ENCODE measurements at regions of chr4 and their contacts with region 1.

Region 1: DNA sequence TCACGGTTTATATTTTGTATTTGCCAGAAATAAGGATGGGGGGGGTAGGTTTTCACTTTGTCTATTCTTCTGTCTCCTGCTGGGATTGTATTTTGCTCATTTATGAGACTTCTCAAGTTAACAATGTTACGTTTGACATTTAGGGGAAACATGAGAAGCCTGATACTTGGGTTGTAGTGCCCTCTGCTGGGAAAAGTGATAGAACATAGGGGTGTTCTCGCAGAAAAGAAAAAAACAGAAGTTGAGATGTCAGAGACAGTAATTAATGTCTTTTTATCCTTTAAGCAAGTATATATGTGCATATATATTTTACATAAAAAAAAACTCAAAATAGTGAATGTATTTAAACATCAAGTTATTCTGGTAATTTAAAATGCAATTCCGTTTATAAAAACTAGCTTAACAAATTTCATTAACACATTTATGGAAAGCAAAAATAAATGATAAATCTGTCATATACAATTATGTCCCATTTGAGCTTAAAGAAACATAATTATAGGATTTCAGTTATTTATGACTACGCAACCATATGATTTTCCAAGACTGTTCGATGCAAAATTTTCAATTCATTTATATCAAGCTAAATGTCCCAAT is 46.0 kb upstream of the TMPRSS11F start:
- DNase-seq: no peak
- ATAC-seq: no peak
- H3K4me3 ChIP-seq: no peak overlapping the region
- H3K27ac ChIP-seq: no peak overlapping the region
- H3K4me1 ChIP-seq: no peaks in the 10 kb centered on the region
- H3K27me3 ChIP-seq: no peaks in the 10 kb centered on the region
- CTCF ChIP-seq: peak; percentile 22

Region 2: GRCh38 chr4:67746797-67747495 is 428.7 kb before region 1 on chr4:
- intact Hi-C with region 1: loop called in 1 of 2 experiments (anchors 10 kb)
- DNase-seq: no peak
- ATAC-seq: peak in 1 of 4 donors; percentile 56
- H3K4me3 ChIP-seq: no peak overlapping the region
- H3K27ac ChIP-seq: no peak overlapping the region
- H3K4me1 ChIP-seq: no peaks in the 10 kb centered on the region
- H3K27me3 ChIP-seq: no peaks in the 10 kb centered on the region
- CTCF ChIP-seq: peak; percentile 61

Region 3: DNA sequence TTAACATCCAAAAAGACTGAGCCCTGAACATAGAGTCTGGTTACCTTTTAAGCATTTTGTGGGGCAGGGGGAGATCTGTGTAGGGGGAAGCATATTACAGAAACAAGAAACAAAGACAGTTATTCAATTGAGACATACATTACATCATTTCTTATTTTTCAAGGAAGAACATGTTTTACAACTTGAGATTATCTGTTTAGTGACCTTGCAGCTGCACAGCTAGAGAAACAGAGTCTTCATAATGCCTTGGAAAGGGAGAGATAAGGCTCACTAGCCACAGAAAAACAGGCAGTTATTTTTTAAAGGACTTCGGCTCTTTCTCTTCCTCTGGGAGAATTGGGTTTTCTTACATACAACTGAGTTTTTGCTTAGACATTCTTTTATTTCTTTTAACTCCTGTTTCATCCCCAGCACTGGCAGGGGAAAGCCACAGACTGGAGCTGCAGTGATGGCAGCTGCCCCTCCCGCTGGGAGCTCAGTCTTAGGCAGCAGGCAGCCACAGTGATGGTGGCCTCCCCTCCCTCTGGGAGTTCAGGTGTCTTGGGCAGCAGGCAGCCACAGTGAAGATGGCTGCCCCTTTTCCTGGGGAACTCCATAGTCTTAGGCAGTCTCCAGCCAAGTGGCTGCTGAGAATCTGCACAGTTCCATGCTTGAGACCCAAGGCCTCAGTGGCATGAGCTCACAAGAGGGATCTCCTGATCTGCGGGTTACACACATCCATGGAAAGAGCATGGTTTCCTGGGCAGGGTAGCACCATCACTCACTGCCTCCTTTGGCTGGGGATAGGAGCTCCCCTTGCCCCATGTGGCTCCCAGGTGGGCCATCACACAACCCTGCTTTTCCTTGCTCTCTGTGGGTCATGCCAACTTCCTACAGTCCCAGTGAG is 26.6 kb before region 1 on chr4:
- intact Hi-C with region 1: no loop called
- DNase-seq: no peak
- ATAC-seq: no peak
- H3K4me3 ChIP-seq: no peak overlapping the region
- H3K27ac ChIP-seq: no peak overlapping the region
- H3K4me1 ChIP-seq: no peaks in the 10 kb centered on the region
- H3K27me3 ChIP-seq: no peaks in the 10 kb centered on the region
- CTCF ChIP-seq: no peak

Region 4: DNA sequence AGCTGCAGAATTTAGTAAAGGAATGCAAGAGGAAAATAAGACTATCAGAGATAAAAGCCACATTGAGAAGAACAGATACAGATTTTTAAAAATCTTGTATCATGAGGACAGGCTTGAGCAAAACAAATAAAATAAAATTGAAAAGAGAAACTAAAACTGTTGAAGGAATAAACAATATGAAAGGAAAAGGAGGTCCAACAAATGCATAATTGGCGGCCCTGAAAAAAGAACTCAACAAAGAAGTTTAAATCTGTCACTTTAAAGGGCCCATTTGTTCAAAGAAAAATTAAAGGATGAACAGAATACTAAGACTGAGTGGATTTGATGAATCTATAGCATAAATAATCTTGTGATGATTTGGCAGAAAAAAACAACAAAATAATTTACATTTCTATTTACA is 33.3 kb after region 1 on chr4:
- intact Hi-C with region 1: no loop called
- DNase-seq: no peak
- ATAC-seq: no peak
- H3K4me3 ChIP-seq: no peak overlapping the region
- H3K27ac ChIP-seq: no peak overlapping the region
- H3K4me1 ChIP-seq: no peaks in the 10 kb centered on the region
- H3K27me3 ChIP-seq: no peaks in the 10 kb centered on the region
- CTCF ChIP-seq: no peak